Sciatic nerve (tissue), 2 donors: ENCODE measurements at regions of chr17 and their contacts with region 1.

Region 1: DNA sequence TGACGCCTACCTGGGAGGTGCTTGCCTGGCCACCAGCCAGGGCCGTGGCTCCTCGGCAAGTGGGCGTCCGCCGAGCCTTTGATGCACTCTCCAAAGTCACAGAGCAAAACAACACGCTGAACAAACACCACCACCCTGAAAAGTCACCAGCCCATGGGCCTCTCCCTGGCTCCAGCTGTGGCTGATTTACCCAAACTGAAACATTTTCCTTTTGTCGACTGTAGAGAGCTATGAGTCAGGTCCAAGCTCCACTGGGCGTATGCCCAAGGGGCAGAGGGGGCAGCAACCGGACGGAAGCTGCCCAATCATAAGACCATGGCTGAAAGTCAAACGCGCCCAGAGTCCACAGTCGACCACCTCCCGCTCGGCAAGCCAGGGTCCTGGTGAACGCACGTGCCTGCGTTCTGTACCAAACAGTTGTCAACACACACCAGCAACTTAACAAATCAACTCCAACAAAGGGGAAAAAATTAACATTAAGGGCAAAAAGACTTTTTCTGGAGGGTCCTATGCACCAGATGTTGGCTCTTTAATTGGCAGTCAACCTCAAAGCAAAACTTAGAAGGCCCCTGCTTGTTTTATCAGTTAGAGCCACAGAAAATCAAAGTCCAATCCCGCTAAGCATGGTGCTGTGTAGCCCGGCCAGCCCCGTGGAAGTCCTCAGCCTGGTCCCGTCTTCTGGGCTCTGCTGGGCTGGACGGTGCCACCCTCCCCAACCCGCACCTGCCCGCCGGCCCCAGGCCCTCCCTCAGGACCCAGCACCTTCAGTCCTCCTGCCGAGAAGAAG is 47.3 kb downstream of the TBC1D16 start:
- DNase-seq: peak; percentile 67
- ATAC-seq: peak; percentile 50

Region 2: DNA sequence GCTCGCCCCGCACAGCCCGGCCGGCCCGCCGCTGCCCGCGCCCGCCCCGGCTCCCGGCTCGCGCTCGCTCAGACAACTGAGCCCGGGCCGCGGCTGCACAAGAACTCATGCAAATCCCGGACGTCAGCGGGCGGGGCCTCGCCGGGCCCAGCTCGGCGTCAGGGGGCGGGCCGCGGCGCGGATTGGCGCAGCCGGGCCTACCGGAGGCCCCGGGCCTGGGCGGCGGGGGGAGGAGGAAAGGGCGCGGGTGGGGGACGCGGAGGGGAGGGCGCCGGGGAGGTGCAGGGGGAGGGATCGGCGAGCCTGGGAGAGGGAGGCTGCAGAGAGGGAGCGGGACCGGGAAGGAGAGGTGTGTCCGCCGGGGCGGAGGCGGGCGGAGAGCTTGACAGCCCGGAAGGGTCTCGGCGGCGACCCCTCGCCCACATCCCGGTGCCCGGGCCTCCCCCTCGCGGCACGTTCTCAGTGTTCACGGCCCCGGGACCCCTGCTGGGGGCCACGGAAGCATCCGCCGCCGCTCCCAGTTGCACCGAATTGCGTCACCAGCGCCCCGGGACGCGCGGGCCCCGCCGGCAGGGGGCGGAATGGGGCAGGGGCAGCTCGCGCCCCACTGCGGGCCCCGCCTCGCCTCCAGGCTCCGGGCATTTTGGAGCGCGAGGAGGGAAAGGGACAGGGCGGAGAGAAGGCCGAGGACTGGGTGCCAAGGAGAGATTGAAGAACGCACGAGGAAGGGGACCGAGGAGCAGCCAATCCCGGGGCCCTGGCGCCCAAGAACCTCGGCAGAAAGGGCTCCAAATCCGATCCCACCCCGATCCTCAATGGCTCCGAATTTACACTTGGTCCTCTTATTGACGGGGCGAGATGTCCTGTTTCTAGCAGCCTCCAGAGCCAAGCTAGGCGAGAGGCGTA is 148.8 kb before region 1 on chr17 and contains the start of gene CBX4:
- intact Hi-C with region 1: loop called (anchors 10 kb)
- DNase-seq: peak; percentile 97
- ATAC-seq: peak; percentile 84
- total RNA-seq, gene CBX4: 16.8 TPM

Region 3: DNA sequence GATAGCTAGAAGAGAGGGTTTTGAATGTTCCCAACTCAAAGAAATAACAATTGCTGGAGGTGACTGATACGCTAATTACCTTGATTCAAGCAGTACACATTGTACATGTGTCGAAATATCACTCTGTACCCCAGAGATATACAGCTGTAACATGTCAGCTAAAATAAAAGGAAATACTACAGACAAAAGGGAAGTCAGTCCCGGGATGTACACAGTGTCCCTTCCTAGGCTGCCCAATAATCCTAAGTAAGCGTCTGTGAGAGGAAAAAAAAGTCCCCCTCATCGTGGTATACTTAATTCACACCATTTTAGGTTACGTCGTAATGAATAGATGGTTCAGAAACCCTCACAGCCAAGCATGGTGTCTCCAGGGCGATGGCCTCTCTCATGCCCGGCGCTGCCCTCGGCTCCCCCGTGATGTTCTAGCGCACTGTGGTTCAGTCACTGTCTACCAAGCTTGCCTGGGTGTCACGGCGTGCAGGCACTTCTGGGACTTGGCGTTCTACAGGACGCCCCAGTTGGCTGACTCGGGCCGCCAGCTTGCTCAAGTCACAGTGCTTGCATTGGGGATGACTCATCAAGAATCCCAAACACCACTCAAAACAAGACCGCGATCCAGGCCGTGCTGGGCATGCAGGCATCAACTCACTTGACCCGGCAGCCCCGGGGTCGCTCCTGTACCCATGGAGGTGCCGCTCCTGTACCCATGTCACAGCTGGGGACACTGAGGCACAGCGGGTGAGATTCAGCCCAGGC is 75.6 kb after region 1 on chr17:
- intact Hi-C with region 1: no loop called
- DNase-seq: no peak
- ATAC-seq: peak; percentile 22